Caco-2 (cell line): ENCODE measurements at regions of chr2 and their contacts with region 1.

Region 1: GRCh38 chr2:86584151-86584913 is 21.1 kb upstream of the CHMP3 start:
- DNase-seq: no peak
- H3K4me3 ChIP-seq: no peak overlapping the region
- H3K4me3 Mint-ChIP-seq: no peak overlapping the region
- H3K27ac Mint-ChIP-seq: no peak overlapping the region
- H3K4me1 ChIP-seq: no peaks in the 10 kb centered on the region
- H3K4me1 Mint-ChIP-seq: no peaks in the 10 kb centered on the region
- H3K27me3 ChIP-seq: no peaks in the 10 kb centered on the region
- H3K27me3 Mint-ChIP-seq: peaks cover 18% of the 10 kb centered on the region
- CTCF ChIP-seq: no peak

Region 2: DNA sequence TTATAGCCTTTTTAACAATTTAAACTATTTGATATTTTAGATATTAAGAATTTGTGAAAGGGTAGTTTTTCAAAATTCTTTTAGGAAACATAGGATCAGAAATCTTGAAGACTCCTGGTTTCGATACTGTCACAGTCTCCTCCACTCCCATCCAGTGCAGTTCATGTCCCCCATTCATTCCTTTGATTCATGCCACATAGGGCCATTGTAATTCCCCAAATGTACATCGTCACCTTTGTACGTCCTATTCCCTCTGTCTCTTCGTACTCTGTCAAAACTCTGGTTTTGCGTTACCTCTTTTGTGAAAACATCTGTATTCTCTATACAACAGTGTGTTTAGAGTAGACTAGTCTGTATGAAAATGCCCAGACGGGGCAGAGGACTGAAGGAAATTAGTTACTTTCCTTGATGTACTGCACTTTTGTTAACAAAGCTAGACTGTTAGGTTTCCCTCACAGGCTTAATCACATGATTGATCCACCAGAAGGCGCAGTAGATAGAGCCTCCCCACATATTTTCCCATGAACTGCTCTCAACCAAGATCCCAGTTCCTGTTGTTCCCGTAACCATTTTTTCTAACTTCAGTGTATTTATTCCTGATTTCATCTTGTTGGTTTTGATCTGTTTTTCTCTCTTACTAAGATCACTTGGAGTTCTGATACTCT is 382.5 kb before region 1 on chr2:
- CTCF ChIA-PET with region 1: no interaction called
- POLR2A ChIA-PET with region 1: no interaction called
- intact Hi-C with region 1: no loop called
- DNase-seq: no peak
- H3K4me3 ChIP-seq: no peak overlapping the region
- H3K4me3 Mint-ChIP-seq: no peak overlapping the region
- H3K27ac Mint-ChIP-seq: no peak overlapping the region
- H3K4me1 ChIP-seq: peaks cover 2% of the 10 kb centered on the region; the same call in 1 of the 2 replicates
- H3K4me1 Mint-ChIP-seq: peaks cover 21% of the 10 kb centered on the region
- H3K27me3 ChIP-seq: no peaks in the 10 kb centered on the region
- H3K27me3 Mint-ChIP-seq: no peaks in the 10 kb centered on the region
- CTCF ChIP-seq: peak in 1 of 2 experiments; percentile 28

Region 3: DNA sequence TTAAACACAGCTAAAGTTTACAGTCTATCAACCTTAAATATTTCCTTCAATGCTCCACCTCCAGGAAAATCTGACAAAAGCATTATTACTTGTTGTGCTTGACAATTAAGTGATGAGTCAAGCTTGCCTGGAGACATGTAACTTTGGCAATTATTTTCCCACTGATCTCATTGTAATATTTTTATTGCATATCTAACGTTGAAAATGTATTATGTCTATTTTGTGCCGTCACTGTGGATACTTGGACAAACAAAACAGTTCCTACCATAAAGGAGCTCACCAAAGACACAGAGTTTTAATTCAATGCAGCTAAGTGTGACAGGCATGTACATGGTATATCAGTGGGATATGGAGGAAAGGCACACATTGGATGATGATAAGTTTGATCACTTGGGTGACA is 14.6 kb after region 1 on chr2:
- CTCF ChIA-PET with region 1: no interaction called
- POLR2A ChIA-PET with region 1: no interaction called
- intact Hi-C with region 1: loop called (anchors 1 kb)
- DNase-seq: no peak
- H3K4me3 ChIP-seq: no peak overlapping the region
- H3K4me3 Mint-ChIP-seq: no peak overlapping the region
- H3K27ac Mint-ChIP-seq: no peak overlapping the region
- H3K4me1 ChIP-seq: no peaks in the 10 kb centered on the region
- H3K4me1 Mint-ChIP-seq: no peaks in the 10 kb centered on the region
- H3K27me3 ChIP-seq: no peaks in the 10 kb centered on the region; the same call in 1 of the 2 replicates
- H3K27me3 Mint-ChIP-seq: peaks cover 4% of the 10 kb centered on the region
- CTCF ChIP-seq: no peak